Mammary epithelial cell (primary cell): ENCODE measurements at regions of chr3 and their contacts with region 1.

Region 1: GRCh38 chr3:170603770-170604510 is 18.1 kb upstream of the SLC7A14 start:
- DNase-seq: no peak
- H3K4me3 ChIP-seq: no peak overlapping the region
- H3K27ac ChIP-seq: no peak overlapping the region
- H3K4me1 ChIP-seq: no peaks in the 10 kb centered on the region
- H3K27me3 ChIP-seq: no peaks in the 10 kb centered on the region
- CTCF ChIP-seq: no peak

Region 2: DNA sequence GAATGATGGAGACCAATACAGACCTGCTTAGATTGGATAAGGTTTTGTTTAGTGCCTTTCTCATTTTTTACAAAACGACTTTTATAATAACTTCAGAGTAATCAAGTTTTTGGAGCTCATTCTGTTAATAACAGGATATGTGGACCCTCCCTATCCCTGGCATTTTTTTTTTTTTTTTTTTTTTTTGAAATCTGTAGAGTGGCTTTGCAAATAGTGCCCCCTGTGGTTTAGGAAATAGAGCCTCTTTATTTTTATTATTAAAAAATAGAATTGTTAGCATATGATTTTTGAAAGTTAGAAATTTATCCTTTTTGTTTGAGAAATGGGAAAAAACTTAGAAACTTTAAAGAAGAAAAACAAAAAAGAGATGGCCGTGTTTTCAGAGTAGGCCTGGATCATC is 235.0 kb before region 1 on chr3:
- CTCF ChIA-PET with region 1: no interaction called
- dilution Hi-C with region 1: no loop called
- in situ Hi-C with region 1: no loop called
- intact Hi-C with region 1: no loop called
- DNase-seq: no peak
- H3K4me3 ChIP-seq: no peak overlapping the region
- H3K27ac ChIP-seq: no peak overlapping the region
- H3K4me1 ChIP-seq: no peaks in the 10 kb centered on the region
- H3K27me3 ChIP-seq: no peaks in the 10 kb centered on the region
- CTCF ChIP-seq: peak; percentile 3 to 36

Region 3: DNA sequence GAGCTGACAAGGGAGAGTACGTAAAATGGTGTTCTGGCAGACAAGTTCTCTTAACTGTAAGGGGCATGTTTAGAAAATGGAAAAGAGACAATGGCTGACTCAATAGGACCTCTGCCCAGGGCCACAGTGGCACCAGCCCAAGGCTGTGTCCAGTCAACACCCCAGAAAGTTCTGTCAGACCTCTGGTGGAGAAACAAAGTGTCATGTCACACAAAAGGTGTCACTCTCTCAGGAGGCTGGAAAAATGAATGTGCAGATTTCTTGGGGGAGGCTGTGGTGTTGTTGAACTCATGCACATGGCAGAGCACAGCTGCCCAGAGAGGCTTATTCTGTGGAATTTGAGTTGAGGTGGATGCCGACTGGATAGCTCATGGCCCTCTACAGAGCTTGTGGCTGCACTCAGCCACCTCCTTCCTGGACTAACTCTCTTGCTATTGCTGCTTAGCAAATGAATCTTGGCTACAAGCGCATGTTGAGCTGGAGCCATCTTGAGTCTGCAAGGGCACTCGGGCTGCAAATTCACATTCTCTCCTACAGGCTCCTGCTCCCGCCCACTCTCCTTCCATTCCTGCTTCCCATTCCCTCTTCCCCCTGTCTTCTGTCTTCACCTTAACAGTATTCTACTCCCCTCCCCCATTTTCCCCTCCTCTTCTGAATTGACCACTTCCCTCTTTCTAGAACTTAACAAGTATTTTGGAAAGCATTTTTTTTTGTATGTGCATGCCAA is 37.7 kb after region 1 on chr3:
- CTCF ChIA-PET with region 1: no interaction called
- dilution Hi-C with region 1: loop called (anchors 5 kb)
- in situ Hi-C with region 1: no loop called
- intact Hi-C with region 1: no loop called
- DNase-seq: no peak
- H3K4me3 ChIP-seq: no peak overlapping the region
- H3K27ac ChIP-seq: no peak overlapping the region
- H3K4me1 ChIP-seq: no peaks in the 10 kb centered on the region
- H3K27me3 ChIP-seq: no peaks in the 10 kb centered on the region
- CTCF ChIP-seq: no peak